IMR-90 (cell line): ENCODE measurements at regions of chr7 and their contacts with region 1.

Region 1: DNA sequence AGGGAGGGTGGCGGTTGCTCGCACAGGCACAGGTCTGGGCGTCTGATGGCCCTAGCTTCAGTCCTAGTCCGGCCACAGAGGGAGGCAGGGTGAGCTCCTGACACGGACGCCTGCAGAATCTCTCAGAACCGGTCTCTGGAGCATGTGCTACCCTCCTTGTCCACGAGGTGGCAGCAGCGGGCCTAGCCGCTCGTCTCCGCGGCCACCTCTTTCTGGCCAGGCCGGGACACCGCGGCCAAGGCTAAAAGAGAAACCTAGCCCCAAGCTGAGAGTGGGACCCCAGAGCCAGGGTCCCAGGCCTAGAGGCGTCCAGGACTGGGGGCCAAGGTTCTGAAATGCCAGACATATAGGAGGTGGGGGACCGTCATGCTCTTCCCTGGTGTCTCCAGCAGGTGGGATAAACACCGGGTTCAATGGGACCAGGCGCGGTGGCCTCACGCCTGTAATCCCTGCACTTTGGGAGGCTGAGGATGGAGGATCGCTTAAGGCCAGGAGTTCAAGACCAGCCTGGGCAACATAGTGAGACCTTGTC is 3.2 kb upstream of the LAT2 start:
- DNase-seq: peak; percentile 57
- ATAC-seq: peak; percentile 90
- H3K4me3 ChIP-seq: no peak overlapping the region
- H3K27ac ChIP-seq: no peak overlapping the region
- H3K4me1 ChIP-seq: peaks cover 4% of the 10 kb centered on the region; the same call in 1 of the 2 replicates
- H3K27me3 ChIP-seq: no peaks in the 10 kb centered on the region
- CTCF ChIP-seq: peak; percentile 91
- POLR2A ChIP-seq: peak; percentile 46; the same call in 1 of the 2 replicates
- RAD21 ChIP-seq: peak; percentile 93

Region 2: DNA sequence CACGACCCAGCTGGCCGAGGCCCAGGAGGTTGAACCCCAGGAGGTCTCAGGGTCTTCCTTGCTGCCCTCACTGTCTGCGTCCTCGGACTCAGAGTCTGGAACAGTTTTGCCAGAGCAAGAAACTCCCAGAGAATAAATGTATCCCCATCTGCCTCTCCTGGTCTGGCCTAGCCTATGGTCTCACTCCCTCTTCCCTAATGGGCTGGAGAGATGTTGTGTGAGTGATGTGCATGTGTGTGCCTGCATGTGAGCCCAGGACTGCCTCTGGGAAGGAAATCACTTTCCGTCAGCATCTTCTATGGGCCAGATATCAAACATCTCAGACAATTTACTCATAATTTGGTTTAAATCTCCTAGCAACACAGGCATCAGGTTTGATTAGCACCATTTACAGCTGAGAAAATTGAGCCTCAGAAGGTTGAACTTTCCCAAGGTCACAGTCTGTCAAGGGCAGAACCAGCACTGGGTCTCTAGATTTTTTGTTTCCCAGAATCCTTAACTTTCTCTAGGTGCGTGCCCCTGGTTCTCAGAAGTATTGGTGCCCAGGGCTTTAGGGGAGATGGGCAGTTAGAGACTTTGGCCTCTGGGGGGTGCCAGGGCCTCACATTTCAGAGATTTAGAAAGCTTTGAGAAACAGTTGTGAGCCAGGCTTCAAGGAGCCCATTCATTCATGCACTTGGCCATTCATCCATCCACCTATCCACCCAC is 340.8 kb before region 1 on chr7:
- CTCF ChIA-PET with region 1: no interaction called
- POLR2A ChIA-PET with region 1: no interaction called
- dilution Hi-C with region 1: no loop called
- in situ Hi-C with region 1: loop called (anchors 10 kb)
- intact Hi-C with region 1: loop called (anchors 1 kb)
- DNase-seq: peak; percentile 63
- ATAC-seq: peak; percentile 80
- H3K4me3 ChIP-seq: no peak overlapping the region
- H3K27ac ChIP-seq: no peak overlapping the region
- H3K4me1 ChIP-seq: peaks cover 18% of the 10 kb centered on the region
- H3K27me3 ChIP-seq: no peaks in the 10 kb centered on the region
- CTCF ChIP-seq: peak; percentile 87
- POLR2A ChIP-seq: no peak
- RAD21 ChIP-seq: peak; percentile 93

Region 3: DNA sequence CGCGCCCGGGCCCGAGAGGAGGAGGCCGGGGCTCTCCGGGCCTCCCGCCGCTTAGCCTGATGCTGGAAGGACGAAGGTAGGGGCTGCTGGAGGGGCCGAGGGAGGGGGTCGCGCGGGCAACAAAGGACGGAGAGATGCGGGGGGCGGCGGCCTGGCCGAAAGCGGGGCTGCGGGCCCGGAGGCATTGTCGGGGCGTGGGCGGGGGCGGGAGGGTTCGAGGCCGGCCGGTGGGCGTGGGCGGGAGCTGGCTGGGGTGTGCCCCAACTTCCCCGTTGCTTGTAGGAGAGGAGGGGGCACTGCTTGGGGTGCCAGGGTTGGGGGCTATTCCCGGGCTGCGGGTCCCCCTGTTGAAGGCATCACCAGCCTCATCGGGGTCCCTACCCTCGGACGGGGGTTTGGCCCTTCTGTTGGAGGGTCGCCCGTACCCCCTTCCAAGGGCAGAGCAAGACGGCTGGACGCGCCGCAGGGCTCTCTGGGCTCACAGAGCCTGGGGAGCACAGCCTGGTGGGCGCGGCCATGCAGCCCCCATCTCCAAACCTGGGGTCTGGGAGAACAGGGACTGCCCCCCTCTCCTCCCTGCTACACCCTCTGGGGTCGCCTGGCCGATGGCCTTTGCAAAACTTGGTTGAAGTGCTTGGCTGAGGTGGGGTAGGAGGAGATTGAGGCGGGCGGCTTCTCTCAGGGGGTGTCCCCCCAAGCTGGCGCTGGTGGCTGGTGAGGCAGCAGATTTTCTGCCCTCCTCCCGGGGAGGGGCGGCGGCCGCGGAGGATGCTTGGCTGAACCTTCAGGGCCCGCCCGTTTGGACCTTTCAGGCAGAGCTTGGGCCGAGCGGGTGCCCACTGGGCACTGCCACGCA is 83.2 kb after region 1 on chr7:
- CTCF ChIA-PET with region 1: interaction called, 5 read pairs
- POLR2A ChIA-PET with region 1: no interaction called
- dilution Hi-C with region 1: no loop called
- in situ Hi-C with region 1: no loop called
- intact Hi-C with region 1: loop called (anchors 5 kb)
- DNase-seq: no peak
- ATAC-seq: peak; percentile 36
- H3K4me3 ChIP-seq: peak overlapping the region; percentile 96
- H3K27ac ChIP-seq: peak overlapping the region; percentile 89
- H3K4me1 ChIP-seq: peaks cover 29% of the 10 kb centered on the region
- H3K27me3 ChIP-seq: no peaks in the 10 kb centered on the region
- CTCF ChIP-seq: no peak
- POLR2A ChIP-seq: no peak
- RAD21 ChIP-seq: peak; percentile 3; the same call in 1 of the 2 replicates

Region 4: DNA sequence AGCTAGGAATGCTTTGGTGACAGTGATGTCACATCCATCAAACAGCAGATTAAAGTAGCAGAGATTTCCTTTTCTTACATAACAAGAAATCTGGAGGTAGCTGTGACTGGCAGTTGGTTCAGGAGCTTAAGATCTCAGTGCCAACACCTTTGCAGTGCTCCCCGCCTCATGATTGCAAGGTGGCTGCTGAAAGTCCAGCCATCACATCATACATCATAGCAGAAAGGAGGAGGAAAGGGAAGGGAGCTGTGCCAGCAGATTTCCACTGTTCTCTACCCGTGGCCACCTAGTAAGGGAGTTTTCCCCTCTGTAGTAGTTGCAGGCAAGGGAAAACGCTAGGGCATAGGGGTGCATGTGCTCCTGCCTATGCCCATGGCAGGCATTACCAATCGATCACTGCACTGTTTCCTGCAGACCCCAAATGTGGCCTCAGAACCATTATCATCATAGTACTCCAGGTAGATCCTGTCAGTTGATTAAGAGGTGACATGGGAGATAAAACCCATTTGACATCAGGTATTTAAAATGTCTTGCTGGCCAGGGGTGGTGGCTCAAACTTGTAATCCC is 189.2 kb after region 1 on chr7:
- CTCF ChIA-PET with region 1: interaction called, 20 read pairs
- POLR2A ChIA-PET with region 1: interaction called, 5 read pairs
- dilution Hi-C with region 1: no loop called
- in situ Hi-C with region 1: loop called (anchors 5 kb)
- intact Hi-C with region 1: loop called (anchors 1 kb)
- DNase-seq: no peak
- ATAC-seq: no peak
- H3K4me3 ChIP-seq: no peak overlapping the region
- H3K27ac ChIP-seq: no peak overlapping the region
- H3K4me1 ChIP-seq: peaks cover 3% of the 10 kb centered on the region
- H3K27me3 ChIP-seq: no peaks in the 10 kb centered on the region
- CTCF ChIP-seq: no peak
- POLR2A ChIP-seq: no peak
- RAD21 ChIP-seq: no peak

Region 5: GRCh38 chr7:74561898-74562613 is 355.4 kb after region 1 on chr7:
- CTCF ChIA-PET with region 1: no interaction called
- POLR2A ChIA-PET with region 1: no interaction called
- dilution Hi-C with region 1: no loop called
- in situ Hi-C with region 1: loop called (anchors 25 kb)
- intact Hi-C with region 1: loop called (anchors 2 kb)
- DNase-seq: no peak
- ATAC-seq: no peak
- H3K4me3 ChIP-seq: no peak overlapping the region
- H3K27ac ChIP-seq: no peak overlapping the region
- H3K4me1 ChIP-seq: no peaks in the 10 kb centered on the region
- H3K27me3 ChIP-seq: no peaks in the 10 kb centered on the region
- CTCF ChIP-seq: no peak
- POLR2A ChIP-seq: no peak
- RAD21 ChIP-seq: no peak